ENCODE measurements at regions of chr12 and their contacts with region 1.

Region 1: DNA sequence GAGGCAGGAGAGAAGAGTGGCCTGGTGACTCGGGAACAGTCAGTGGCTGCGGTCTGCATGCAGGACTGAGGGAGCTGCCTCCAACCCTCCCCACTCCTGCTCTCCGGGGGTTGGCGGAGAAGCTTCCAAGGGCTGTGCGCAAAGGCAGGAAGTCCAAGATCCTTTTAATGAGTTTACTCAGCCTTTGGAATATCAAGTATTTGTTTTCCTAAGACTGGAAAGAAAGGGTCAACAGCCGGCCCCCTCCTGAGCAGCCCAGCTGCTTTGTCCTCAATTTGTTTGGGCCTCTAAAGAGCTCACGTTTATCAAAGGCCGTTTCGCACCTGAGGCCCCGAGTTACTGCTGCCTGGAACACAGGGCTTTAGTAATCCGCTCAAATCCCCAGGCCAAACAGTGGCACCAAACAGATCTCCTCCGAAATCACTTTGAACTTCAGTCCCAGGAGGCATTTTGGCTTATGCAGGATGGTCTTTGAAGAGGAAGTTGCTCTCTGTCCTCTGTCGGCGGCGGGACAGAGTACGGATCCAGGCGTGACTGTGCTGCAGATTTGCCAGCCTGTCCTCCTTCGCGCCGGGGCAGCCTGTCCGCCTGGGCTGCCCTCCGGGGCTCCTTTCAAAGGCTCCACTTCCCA is 117.2 kb upstream of the FZD10 start:
- DNase-seq: no peak
- H3K4me3 ChIP-seq: no peak overlapping the region
- H3K27ac ChIP-seq: no peak overlapping the region
- H3K4me1 ChIP-seq: peaks cover 0 to 5% (median 2%) of the 10 kb centered on the region in 4 donors
- H3K27me3 ChIP-seq: peaks cover 0 to 92% (median 27%) of the 10 kb centered on the region in 4 donors
- CTCF ChIP-seq: no peak
- EP300 ChIP-seq: no peak
- POLR2A ChIP-seq: no peak

Region 2: DNA sequence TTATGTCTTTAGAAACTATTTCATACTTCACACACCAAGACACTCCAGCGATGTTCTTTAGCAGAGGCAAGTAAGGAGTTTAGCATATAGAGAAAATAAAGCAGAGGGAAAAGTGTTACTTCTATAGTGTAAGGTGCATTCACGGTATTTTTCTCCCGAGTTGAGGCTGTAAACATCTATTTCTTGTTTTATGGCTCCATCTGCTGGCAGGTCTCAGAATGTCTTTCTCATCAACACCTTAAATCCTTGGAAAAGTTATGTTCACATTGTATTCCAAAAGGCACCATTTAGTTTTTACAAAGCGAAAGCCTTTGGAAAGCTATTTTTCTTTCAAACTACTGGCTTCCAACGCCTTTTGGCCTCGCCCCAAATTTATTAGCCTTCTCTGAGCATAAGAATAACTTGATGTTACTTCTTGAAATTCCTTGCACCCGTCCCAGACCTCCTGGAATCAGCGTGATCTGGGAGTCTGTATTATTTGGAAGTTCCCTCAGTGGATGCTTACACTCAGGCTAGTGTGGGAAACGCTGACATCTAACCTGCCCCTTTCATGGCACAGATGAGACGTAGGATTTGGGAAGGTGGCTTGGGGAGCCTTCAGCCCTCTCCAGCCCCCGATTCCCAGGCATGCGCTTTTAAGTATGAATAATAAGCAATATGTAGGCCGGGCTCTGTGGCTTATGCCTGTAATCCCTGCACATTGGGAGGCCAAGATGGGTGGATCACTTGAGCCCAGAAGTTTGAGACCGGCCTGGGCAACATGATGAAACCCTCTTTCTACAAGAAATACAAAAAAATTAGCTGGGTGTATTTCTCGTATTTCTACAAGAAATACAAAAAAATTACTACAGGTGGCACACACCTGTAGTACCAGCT is 290.6 kb after region 1 on chr12:
- intact Hi-C with region 1: loop called (anchors 2 kb)
- DNase-seq: peak; percentile 86
- H3K4me3 ChIP-seq: no peak overlapping the region
- H3K27ac ChIP-seq: no peak overlapping the region
- H3K4me1 ChIP-seq: peaks cover 3 to 17% (median 9%) of the 10 kb centered on the region in 4 donors
- H3K27me3 ChIP-seq: peaks cover 0 to 79% (median 9%) of the 10 kb centered on the region in 4 donors
- CTCF ChIP-seq: peak; percentile 58 to 68 (median 59)
- EP300 ChIP-seq: no peak
- POLR2A ChIP-seq: no peak

Region 3: DNA sequence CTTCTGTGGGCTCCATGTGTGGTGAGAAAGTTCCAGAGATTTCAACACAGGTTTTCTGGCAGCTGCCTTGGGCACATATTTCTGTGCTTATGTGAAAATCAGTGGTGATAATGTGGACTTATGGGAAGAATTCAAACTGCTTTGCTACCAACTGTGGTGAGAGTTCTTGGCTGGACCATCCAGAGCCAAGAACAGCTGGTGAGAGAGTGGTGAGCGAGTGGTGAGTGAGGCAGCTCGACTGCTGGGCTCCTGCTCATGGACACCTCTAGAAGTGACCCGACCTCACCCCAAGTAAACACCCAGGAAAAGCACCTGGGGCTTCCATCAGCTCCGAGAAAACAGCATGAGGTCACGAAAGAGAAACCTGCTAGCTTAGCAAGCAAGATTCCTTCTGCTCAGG is 399.0 kb after region 1 on chr12:
- intact Hi-C with region 1: no loop called
- DNase-seq: no peak
- H3K4me3 ChIP-seq: no peak overlapping the region
- H3K27ac ChIP-seq: no peak overlapping the region
- H3K4me1 ChIP-seq: no peaks in the 10 kb centered on the region
- H3K27me3 ChIP-seq: no peaks in the 10 kb centered on the region
- CTCF ChIP-seq: no peak
- EP300 ChIP-seq: no peak
- POLR2A ChIP-seq: no peak

Region 4: DNA sequence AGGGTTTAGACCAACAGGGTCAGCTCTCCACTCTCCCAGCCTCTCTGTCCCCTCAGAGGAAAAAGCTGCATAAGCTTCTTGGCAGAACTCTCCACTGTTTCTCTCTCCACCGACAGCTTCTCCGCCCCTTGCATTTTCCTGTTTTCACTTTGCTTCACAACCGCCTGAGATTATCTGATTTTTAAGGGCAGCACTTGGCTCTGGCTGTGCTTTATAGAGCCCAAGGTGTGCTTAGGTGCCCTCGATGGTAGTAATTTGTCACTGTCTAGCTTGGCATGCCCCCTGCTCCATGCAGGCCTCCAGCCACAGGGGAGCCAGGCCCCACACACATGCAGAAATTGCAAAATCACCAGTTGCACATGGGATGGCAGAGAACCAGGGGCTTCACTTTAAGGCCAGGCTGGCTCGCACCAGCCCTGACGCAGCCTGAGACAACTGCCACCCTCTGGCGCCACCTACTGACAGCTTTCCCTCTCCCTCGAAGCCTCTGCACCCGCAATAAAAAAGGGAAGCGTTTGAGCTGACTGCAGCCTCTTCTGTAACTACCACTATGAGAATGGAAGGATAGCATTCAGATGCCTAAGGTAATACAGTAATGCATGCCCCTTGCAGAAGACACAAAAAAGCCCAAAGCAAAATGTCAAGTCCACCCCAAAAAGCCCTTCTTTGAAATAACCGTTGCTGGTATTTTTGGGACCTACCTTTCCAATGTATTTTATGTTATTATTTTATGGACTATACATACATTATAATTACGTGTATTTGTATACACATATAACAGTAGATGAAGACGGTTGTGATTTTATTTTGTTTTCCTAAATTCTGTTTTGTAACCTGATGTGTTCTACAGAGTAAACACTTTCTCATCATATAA is 703.0 kb after region 1 on chr12:
- intact Hi-C with region 1: loop called (anchors 5 kb)
- DNase-seq: no peak
- H3K4me3 ChIP-seq: peak overlapping the region in 1 of 4 donors; percentile 9
- H3K27ac ChIP-seq: no peak overlapping the region
- H3K4me1 ChIP-seq: peaks cover 0 to 8% (median 7%) of the 10 kb centered on the region in 4 donors
- H3K27me3 ChIP-seq: peaks cover 0 to 36% (median 0%) of the 10 kb centered on the region in 4 donors
- CTCF ChIP-seq: peak; percentile 65 to 79 (median 67)
- EP300 ChIP-seq: no peak
- POLR2A ChIP-seq: no peak

Measured in esophagus muscularis mucosa (tissue), 4 donors.